Colonic mucosa (tissue), 4 donors: ENCODE measurements at regions of chr11 and their contacts with region 1.

Region 1: GRCh38 chr11:102633385-102634026 is 8.4 kb upstream of the MMP20 start:
- DNase-seq: no peak
- H3K4me3 ChIP-seq: no peak overlapping the region
- H3K27ac ChIP-seq: no peak overlapping the region
- H3K4me1 ChIP-seq: no peaks in the 10 kb centered on the region
- H3K27me3 ChIP-seq: no peaks in the 10 kb centered on the region
- CTCF ChIP-seq: no peak

Region 2: DNA sequence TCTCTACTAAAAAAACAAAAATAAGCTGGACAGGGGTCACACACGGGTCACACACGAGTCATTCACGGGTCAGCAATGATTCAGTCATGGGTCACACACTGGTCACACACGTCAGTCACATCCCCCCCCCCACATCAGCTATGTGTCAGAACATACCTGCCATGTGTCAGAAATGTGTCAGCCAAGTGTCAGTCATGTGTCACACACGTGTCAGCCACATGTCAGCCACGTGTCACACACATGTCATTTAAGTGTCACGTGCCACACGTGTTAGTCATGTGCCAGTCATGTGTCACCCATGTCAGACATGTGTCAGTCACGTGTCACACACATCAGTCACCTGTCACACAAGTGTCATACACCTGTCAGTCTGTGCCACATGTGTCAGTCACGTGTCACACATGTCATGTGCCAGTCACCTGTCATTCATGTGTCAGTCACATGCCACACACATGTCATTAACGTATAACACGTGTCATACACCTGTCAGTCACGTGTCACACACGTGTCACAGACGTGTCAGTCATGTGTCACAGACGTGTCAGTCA is 20.3 kb after region 1 on chr11:
- intact Hi-C with region 1: loop called (anchors 2 kb)
- DNase-seq: no peak
- H3K4me3 ChIP-seq: no peak overlapping the region
- H3K27ac ChIP-seq: no peak overlapping the region
- H3K4me1 ChIP-seq: no peaks in the 10 kb centered on the region
- H3K27me3 ChIP-seq: no peaks in the 10 kb centered on the region
- CTCF ChIP-seq: no peak